ENCODE measurements at regions of chr15 and their contacts with region 1.

Region 1: DNA sequence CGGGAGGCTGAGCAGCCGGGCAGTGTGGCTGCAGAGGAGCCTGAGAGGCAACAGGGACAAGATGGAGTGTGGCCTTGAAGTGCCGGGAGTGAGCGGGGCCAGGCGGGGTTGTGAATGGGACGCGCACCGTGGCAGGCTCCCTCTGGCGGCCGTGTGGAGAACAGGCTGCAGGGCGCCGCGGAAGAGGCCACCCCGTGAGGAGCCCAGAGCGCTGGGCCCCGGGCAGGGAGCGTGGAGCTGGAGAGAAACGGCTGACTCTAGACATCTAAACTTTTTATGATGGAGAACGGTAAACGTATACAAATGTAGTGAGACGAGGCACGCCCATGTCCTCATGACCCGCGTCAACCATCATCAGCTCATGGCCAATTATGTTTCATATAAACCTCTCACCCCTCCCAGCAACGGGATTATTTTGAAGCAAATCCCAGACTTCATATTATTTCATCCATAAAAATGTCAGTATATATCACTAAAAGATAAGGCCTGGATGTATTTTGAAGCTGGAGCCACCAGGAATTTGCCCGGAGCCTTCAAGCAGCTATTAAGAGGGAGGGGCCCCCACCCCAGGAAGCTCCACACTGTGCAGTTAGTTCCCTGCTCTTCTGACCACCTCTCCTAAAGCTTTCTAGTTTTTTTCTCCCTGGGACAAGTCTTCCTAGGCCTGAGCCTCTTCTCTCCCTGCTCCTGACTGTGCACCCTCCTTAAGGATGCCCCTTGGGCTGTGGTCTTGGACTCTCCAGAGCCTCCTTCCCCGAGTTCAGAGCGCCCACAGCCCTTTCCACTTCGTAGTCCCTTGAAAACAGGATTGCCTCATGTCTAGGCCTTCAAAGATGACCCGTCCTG is 149.4 kb downstream of the SMAD6 start:
- H3K4me3 ChIP-seq: no peak overlapping the region
- H3K27ac ChIP-seq: peak overlapping the region; percentile 42
- H3K4me1 ChIP-seq: peaks cover 7% of the 10 kb centered on the region
- CTCF ChIP-seq: peak; percentile 99

Region 2: GRCh38 chr15:66535016-66535415 is 316.4 kb before region 1 on chr15:
- CTCF ChIA-PET with region 1: no interaction called
- POLR2A ChIA-PET with region 1: interaction called, 10 read pairs
- H3K4me3 ChIP-seq: no peak overlapping the region
- H3K27ac ChIP-seq: no peak overlapping the region
- H3K4me1 ChIP-seq: no peaks in the 10 kb centered on the region
- CTCF ChIP-seq: no peak

Region 3: DNA sequence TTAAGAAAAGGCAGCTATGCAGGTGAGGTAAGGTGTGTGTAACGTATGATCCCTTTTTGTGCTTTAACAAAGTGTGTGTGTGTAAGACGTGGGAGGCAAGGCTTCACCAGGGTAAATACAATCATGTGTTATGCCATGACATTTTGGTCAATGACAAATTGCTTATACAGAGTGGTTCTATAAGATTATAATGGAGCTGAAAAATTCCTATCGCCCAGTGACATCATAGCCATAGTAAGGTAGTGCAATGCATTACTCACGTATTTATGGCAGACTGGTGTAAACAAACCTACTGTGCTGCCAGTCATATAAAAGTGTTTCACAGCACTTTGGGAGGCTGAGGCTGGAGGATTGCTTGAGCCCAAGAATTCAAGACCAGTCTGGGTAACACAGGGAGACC is 225.5 kb before region 1 on chr15:
- CTCF ChIA-PET with region 1: interaction called, 17 read pairs
- POLR2A ChIA-PET with region 1: no interaction called
- H3K4me3 ChIP-seq: no peak overlapping the region
- H3K27ac ChIP-seq: no peak overlapping the region
- H3K4me1 ChIP-seq: no peaks in the 10 kb centered on the region
- CTCF ChIP-seq: no peak

Region 4: GRCh38 chr15:66774001-66774814 is 77.2 kb before region 1 on chr15:
- CTCF ChIA-PET with region 1: interaction called, 76 read pairs
- POLR2A ChIA-PET with region 1: interaction called, 3 read pairs
- H3K4me3 ChIP-seq: no peak overlapping the region
- H3K27ac ChIP-seq: no peak overlapping the region
- H3K4me1 ChIP-seq: peaks cover 23% of the 10 kb centered on the region
- CTCF ChIP-seq: peak; percentile 99

Region 5: DNA sequence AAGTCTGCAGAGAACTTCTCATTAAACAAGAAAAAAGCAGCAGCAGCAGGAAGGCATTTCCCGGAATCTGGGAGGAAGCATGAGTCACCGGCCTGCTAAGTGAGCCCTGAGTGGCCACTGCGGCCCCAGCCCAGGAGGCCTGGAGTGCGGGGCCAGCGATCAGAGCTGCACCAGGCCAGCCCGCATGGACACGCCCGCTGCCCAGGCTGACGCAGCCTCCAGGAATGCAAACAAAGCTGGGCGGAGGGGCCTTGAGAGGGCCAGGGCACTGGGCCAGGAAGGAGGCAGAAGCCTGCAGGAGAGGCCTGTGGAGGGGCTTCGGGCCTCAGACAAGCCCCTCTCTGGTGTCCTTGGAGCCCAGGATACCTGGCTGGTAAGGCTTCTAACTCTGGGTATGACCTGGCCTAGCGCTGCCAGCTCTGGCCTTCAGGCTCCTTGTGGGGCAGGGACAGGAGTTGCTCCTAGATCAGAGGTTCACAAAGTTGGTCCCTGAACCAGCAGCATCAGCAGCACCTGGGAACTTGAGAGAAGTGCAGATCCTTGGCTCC is 48.2 kb before region 1 on chr15:
- CTCF ChIA-PET with region 1: interaction called, 10 read pairs
- POLR2A ChIA-PET with region 1: interaction called, 3 read pairs
- H3K4me3 ChIP-seq: no peak overlapping the region
- H3K27ac ChIP-seq: peak overlapping the region; percentile 68
- H3K4me1 ChIP-seq: peaks cover 10% of the 10 kb centered on the region
- CTCF ChIP-seq: no peak

Region 6: DNA sequence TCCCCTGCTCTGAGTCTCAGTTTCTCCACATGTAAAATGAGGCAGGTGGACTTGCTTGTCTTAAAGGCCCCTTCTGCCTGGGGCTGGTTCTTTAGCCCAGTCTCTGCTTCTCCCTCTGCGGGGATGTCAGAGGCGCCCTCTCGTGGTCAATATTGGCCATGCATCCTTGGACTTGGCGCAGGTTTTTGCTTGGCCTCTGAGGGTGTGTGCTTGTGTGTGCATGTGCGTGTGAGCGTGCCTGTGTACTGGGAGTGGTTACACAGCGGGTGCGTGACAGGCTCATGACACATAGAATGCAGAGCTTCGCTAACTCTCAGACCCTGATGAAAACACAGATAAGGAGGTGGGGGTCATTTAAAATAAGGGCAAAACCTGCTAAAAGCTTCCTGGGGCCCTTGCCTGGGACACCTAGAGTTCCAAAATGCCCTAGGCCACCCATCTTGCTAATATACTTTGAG is 11.5 kb after region 1 on chr15:
- CTCF ChIA-PET with region 1: interaction called, 80 read pairs
- POLR2A ChIA-PET with region 1: no interaction called
- H3K4me3 ChIP-seq: no peak overlapping the region
- H3K27ac ChIP-seq: no peak overlapping the region
- H3K4me1 ChIP-seq: no peaks in the 10 kb centered on the region
- CTCF ChIP-seq: peak; percentile 95

Region 7: GRCh38 chr15:66907826-66908743 is 56.6 kb after region 1 on chr15:
- CTCF ChIA-PET with region 1: interaction called, 16 read pairs
- POLR2A ChIA-PET with region 1: no interaction called
- H3K4me3 ChIP-seq: no peak overlapping the region
- H3K27ac ChIP-seq: no peak overlapping the region
- H3K4me1 ChIP-seq: no peaks in the 10 kb centered on the region
- CTCF ChIP-seq: no peak

Measured in HEK293 (cell line).